ENCODE measurements at regions of chr20 and their contacts with region 1.

Region 1: DNA sequence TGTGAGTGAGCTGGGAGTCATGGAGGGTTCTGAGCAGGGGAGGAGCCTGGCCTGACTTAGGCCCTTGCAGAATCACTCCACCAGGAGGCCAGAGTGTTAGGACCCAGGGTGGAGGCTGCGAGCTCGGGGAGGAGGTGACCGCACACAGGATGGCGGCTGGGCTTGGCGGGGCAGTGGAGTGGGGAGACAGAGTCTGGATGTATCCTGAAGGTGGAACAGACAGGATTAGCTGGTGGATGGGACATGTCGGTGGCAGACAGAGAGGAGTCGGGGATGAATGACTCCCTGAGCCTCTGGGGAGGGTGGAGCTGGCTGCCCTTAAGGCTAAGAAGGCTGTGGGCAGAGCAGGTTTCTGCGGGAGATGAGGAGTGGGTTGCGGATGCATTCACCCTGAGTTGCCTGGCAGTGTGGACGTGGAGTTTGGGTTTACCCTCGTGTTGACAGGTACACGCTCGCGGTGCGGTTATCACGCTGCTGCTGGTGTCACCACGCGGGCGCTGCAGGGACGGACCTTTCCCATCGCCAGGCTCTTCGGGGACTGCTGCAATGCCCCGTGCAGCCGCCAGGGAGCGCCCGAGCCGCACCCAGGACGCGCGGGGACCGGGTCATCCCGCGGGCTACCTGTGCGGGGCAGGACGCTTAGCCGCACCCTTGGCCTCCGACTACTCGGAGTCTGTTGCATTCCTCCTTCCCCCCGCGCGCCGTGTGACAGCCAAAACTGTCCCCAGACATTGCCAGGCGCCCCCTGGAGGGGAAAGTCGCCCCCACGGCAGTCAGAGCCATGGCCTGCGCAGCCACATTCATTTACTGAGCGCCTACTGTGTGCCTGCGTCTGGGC is 43.0 kb upstream of the PTGIS start:
- DNase-seq: peak; percentile 91
- H3K4me3 ChIP-seq: peak overlapping the region; percentile 19 to 61; a peak in 3 of 4 replicates
- H3K27ac ChIP-seq: no peak overlapping the region
- H3K4me1 ChIP-seq: peaks cover 0 to 11% of the 10 kb centered on the region in 2 experiments; a peak in 1 of 4 replicates
- H3K27me3 ChIP-seq: 0 out of 2 replicates have a peak, but pooled peaks cover 5% of the 10 kb centered on the region
- CTCF ChIP-seq: peak; percentile 92
- EP300 ChIP-seq: no peak
- RAD21 ChIP-seq: peak; percentile 93

Region 2: GRCh38 chr20:49278036-49278817 is 332.7 kb before region 1 on chr20 and contains the start of gene ZNFX1:
- CTCF ChIA-PET with region 1: no interaction called
- POLR2A ChIA-PET with region 1: no interaction called
- DNase-seq: peak; percentile 96
- H3K4me3 ChIP-seq: peak within 1 kb of the TSS; percentile 65 to 90
- H3K27ac ChIP-seq: peak within 1 kb of the TSS; percentile 95
- H3K4me1 ChIP-seq: peaks cover 17 to 18% of the 10 kb centered on the region in 2 experiments
- H3K27me3 ChIP-seq: no peaks in the 10 kb centered on the region
- CTCF ChIP-seq: no peak; the same call in 1 of the 2 replicates
- EP300 ChIP-seq: 0 out of 4 replicates have a peak, but pooled peaks of 1 of the 2 experiments have one; percentile 1
- RAD21 ChIP-seq: no peak
- polyA plus RNA-seq, gene ZNFX1: 3.9 and 4.6 TPM in 2 replicates

Region 3: DNA sequence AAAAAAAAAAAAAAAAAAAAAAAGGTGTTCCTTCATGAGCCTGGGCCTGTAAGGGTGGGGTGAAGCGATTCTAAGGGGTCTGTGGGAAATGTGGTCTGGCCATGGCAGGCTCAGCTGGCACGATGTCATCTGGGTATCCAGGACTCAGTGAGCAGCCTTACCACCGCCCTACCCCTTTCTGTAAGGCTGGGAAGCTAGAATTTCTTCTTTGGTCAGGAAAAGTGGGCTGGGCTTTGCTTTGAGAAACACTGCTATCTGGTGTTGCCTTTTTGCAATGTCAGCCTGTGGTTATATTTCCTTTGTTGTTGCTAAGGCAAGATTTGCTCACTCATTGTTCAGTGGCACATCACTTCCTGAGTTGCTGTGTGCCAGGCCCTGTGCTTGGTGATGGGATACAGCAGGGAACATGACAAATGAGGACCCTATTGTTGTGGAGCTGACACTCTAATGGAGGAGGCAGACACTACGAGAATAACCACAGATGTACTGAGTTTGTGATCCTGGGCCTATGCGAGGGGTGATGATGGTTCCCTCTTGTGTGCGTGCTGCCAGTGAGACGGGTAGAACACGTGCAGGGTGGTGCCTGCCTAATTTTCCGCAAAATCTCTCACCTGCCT is 287.2 kb before region 1 on chr20:
- CTCF ChIA-PET with region 1: interaction called, 62 read pairs
- POLR2A ChIA-PET with region 1: no interaction called
- DNase-seq: peak; percentile 41
- H3K4me3 ChIP-seq: no peak overlapping the region
- H3K27ac ChIP-seq: no peak overlapping the region; a peak in 1 of 4 replicates
- H3K4me1 ChIP-seq: peaks cover 0 to 8% of the 10 kb centered on the region in 2 experiments; a peak in 1 of 4 replicates
- H3K27me3 ChIP-seq: peaks cover 14% of the 10 kb centered on the region
- CTCF ChIP-seq: peak; percentile 56
- EP300 ChIP-seq: no peak
- RAD21 ChIP-seq: peak; percentile 72

Region 4: GRCh38 chr20:49508435-49509199 is 102.3 kb before region 1 on chr20:
- CTCF ChIA-PET with region 1: interaction called, 49 read pairs
- POLR2A ChIA-PET with region 1: no interaction called
- DNase-seq: peak; percentile 74
- H3K4me3 ChIP-seq: no peak overlapping the region
- H3K27ac ChIP-seq: no peak overlapping the region
- H3K4me1 ChIP-seq: peaks cover 10 to 15% of the 10 kb centered on the region in 2 experiments; a peak in 2 of 4 replicates
- H3K27me3 ChIP-seq: no peaks in the 10 kb centered on the region
- CTCF ChIP-seq: peak; percentile 69
- EP300 ChIP-seq: no peak
- RAD21 ChIP-seq: peak; percentile 74

Region 5: DNA sequence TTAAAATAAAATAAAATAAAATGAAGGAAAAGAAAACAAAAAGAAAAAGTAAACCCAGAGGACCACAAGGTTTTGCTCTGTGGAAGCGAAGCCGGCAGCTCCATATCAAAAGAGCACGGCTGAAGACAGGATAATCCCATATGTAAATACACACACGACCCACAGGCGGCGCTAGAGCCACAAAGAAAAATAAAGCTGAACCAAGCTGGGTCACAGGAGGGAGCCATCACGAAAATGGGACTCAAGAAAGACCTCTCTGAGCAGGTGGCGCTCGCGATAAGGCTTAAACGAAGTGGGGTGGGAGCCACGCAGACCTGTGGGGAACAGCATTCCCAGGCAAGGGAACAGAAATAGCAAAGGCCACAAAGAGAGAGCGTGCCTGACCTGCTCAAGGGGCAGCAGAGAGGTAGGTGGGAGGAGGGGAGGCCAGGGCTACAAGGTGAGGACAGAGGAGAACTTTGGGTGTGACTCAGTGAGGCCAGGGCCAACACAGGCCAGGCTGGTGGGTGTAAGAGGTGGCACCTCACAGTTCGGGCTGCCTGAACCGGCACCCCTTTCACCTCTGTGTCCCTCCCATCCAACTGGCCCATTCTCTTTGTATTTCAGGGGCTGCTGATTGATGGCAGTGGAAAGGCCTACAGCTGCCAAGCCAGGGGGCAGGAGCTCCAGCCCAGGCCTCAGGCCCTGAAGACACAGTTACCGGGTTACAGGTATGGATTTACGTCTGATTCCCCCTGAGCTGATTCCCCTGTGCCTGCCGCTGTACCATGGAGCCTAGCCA is 69.0 kb before region 1 on chr20:
- CTCF ChIA-PET with region 1: interaction called, 556 read pairs
- POLR2A ChIA-PET with region 1: interaction called, 4 read pairs
- DNase-seq: peak; percentile 78
- H3K4me3 ChIP-seq: no peak overlapping the region; a peak in 1 of 4 replicates
- H3K27ac ChIP-seq: no peak overlapping the region
- H3K4me1 ChIP-seq: no peaks in the 10 kb centered on the region
- H3K27me3 ChIP-seq: no peaks in the 10 kb centered on the region
- CTCF ChIP-seq: peak; percentile 78
- EP300 ChIP-seq: no peak
- RAD21 ChIP-seq: peak; percentile 89

Region 6: DNA sequence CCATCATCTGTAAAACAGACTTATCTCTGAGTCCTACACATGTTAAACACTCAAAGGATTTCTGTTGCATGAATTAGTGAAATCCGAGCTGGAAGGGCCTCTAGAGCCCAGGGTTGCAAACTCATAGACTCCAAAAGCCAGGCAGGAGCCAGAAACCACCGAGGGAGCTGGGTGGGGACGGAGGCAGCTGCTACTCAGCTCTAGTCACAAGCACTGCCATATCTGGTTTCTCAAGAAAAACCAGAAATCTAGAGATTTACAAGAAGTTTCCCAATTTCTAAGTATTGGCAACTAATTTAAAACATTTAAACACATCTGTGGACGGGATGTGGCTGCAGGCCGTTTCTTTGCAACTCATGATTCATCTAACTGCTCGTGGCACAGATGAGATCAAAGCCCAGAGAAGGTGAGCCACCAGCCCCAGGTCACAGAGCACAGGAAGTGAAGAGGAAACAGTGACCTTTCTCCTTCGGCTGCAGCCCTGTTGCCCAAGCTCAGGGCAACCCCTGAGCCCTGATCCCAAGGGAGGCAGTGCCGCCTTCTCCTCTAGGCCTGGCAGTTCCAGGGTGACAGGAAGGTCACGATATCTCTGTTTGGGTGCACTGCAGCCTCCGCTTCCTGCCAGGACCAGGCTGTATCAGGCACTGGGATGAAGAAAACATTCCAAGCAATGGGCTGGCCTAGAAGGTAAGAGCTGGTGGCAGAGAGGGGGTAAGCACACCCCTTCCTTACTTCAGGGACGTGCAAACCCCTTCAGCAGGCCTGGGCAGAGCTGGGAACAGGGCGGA is 16.6 kb before region 1 on chr20:
- CTCF ChIA-PET with region 1: interaction called, 16 read pairs
- POLR2A ChIA-PET with region 1: no interaction called
- DNase-seq: no peak
- H3K4me3 ChIP-seq: no peak overlapping the region
- H3K27ac ChIP-seq: no peak overlapping the region
- H3K4me1 ChIP-seq: peaks cover 0 to 5% of the 10 kb centered on the region in 2 experiments; a peak in 1 of 4 replicates
- H3K27me3 ChIP-seq: no peaks in the 10 kb centered on the region
- CTCF ChIP-seq: no peak
- EP300 ChIP-seq: no peak
- RAD21 ChIP-seq: no peak

Region 7: GRCh38 chr20:49812463-49813304 is 201.8 kb after region 1 on chr20 and contains the start of gene SLC9A8:
- CTCF ChIA-PET with region 1: interaction called, 15 read pairs
- POLR2A ChIA-PET with region 1: no interaction called
- DNase-seq: peak; percentile 95
- H3K4me3 ChIP-seq: peak within 1 kb of the TSS; percentile 78 to 79
- H3K27ac ChIP-seq: peak within 1 kb of the TSS; percentile 73 to 83
- H3K4me1 ChIP-seq: peaks cover 0 to 12% of the 10 kb centered on the region in 2 experiments; a peak in 1 of 4 replicates
- H3K27me3 ChIP-seq: no peaks in the 10 kb centered on the region
- CTCF ChIP-seq: peak; percentile 34
- EP300 ChIP-seq: 0 out of 4 replicates have a peak, but pooled peaks of 1 of the 2 experiments have one; percentile 11
- RAD21 ChIP-seq: no peak
- polyA plus RNA-seq, gene SLC9A8: 2.8 and 3.4 TPM in 2 replicates

Region 8: GRCh38 chr20:49853640-49854039 is 242.7 kb after region 1 on chr20:
- CTCF ChIA-PET with region 1: interaction called, 39 read pairs
- POLR2A ChIA-PET with region 1: no interaction called
- DNase-seq: peak; percentile 45
- H3K4me3 ChIP-seq: no peak overlapping the region
- H3K27ac ChIP-seq: peak overlapping the region in 1 of 2 experiments; percentile 84; a peak in 2 of 4 replicates
- H3K4me1 ChIP-seq: peaks cover 4 to 25% of the 10 kb centered on the region in 2 experiments; a peak in 3 of 4 replicates
- H3K27me3 ChIP-seq: no peaks in the 10 kb centered on the region
- CTCF ChIP-seq: no peak
- EP300 ChIP-seq: no peak
- RAD21 ChIP-seq: no peak

Measured in SK-N-SH (cell line).